ENCODE measurements at regions of chr12 and their contacts with region 1.

Region 1: DNA sequence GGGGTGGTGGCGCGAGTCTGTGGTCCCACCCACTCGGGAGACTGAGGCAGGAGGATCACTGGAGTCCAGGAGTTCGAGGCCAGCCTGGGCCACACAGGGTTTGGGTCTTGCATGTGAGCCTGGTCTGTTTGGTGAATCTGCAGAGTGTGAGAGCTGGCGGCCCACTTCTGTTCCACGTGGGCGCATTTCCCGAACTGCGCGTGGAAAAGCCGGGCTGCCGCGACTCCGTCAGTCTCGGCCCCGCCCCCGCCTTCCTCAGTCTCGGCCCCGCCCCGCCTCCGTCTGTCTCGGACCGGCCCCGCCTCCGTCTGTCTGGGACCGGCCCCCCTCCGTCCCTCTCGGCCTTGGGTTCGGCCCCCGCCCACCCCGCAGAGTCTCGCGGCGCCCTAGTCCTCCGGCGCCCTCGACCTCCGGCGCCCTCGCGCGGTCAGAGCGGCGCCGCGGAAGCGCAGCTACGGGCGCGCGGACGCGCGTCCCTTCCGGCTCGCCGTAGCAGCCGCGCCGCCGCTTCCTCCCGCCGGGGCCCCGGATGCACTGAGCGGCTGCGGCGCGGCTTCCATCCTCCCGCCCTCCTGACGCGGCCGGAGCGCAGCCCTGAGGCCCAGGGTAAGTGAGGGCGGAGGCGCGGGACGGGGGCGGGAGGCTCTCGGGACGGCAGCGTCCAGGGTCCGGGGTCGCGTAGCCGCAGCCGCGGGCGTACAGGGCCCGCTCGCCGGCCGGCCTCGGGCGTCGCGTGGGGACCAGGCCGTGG is at the start of gene EP400:
- DNase-seq: peak; percentile 96 to 98 (median 97)
- H3K4me3 ChIP-seq: peak within 1 kb of the TSS; percentile 89
- H3K27ac ChIP-seq: peak within 1 kb of the TSS; percentile 13 to 75
- H3K4me1 ChIP-seq: peaks cover 8% of the 10 kb centered on the region
- H3K27me3 ChIP-seq: no peaks in the 10 kb centered on the region
- CTCF ChIP-seq: peak in 2 of 3 donors; percentile 53 to 75
- EP300 ChIP-seq: no peak
- POLR2A ChIP-seq: no peak
- total RNA-seq, gene EP400: 20.3 to 60.7 (median 50.4) TPM

Region 2: DNA sequence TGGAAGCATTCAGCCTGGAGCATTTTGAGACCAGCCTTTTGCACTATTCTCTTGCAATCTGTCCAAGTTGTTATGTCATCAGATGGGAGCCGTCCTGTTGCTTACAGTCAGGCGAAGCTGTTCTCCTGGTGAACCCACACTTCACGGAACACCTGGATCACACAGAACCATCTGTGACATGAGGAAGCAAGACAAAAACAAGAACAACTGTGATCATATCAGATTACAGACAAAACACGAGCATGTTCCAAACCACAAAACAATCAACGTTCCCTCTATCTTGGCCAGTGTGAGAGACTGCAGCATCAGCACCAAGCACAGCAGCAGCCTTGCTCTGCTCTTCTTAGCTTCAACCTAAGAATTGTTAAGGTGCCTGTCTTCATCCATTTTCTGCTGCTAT is 419.2 kb before region 1 on chr12:
- intact Hi-C with region 1: no loop called
- DNase-seq: no peak
- H3K4me3 ChIP-seq: no peak overlapping the region
- H3K27ac ChIP-seq: no peak overlapping the region
- H3K4me1 ChIP-seq: no peaks in the 10 kb centered on the region
- H3K27me3 ChIP-seq: no peaks in the 10 kb centered on the region
- CTCF ChIP-seq: no peak
- EP300 ChIP-seq: no peak
- POLR2A ChIP-seq: no peak

Region 3: DNA sequence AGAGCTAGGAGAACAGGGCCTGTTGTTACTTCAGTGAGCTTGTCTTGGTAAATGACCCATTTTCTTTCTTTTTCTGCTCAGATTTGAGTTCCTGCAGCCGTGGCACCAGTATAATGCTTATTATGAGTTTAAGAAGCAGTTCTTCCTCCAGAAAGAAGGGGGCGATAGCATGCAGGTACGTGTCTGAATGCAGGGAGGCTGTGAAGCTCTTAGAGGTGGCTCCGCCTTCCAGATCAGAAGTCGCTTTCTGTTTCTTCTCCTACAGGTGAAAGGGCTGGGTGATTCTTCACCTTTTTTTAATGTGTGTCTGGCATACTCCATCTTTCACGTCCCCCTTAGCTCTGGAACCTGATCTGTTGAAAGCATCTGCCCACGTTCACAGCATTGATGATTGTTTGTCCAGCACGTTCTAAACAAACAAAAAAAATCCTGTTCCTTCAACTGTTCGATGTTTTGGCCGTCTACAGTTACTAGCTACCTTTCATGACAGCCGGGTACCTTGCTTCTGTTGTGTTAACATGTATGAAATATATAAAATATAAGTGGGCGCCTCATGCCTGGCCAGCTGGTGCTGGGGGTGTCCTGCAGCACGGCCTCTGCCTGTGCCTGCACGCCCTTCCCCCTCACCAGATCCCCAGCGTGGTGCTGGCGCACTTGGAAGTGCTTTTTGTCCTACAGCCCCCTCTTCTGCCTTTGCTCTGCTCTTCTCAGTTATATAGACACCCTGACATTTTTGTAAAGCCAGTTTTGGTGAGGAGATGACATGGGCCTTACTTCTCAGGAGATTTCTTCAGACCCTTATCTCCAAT is 194.1 kb before region 1 on chr12:
- intact Hi-C with region 1: no loop called
- DNase-seq: peak in 1 of 5 donors; percentile 15
- H3K4me3 ChIP-seq: no peak overlapping the region
- H3K27ac ChIP-seq: no peak overlapping the region
- H3K4me1 ChIP-seq: no peaks in the 10 kb centered on the region
- H3K27me3 ChIP-seq: no peaks in the 10 kb centered on the region
- CTCF ChIP-seq: no peak
- EP300 ChIP-seq: no peak
- POLR2A ChIP-seq: no peak

Region 4: DNA sequence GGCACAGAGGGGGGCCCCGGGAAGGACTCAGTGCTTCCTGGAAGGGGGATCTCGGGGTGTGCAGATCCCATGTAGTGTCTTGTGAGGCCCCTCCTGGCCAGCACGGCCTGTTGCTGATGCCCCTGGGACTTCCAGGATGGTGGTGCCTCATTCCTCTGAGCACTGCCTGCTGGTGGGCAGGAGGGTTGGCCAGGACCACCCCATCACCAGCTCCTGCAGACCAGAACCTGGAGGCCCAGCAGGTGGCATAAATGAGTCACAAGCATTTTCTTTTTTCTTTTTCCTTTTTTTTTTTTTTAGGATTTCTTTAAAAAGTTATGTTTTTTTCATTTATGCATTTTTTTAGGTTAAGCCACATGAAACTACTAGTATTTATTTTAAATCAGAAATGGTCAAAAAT is 113.4 kb before region 1 on chr12:
- intact Hi-C with region 1: loop called in 1 of 4 experiments (anchors 5 kb)
- DNase-seq: no peak
- H3K4me3 ChIP-seq: no peak overlapping the region
- H3K27ac ChIP-seq: no peak overlapping the region
- H3K4me1 ChIP-seq: peaks cover 5% of the 10 kb centered on the region
- H3K27me3 ChIP-seq: no peaks in the 10 kb centered on the region
- CTCF ChIP-seq: no peak
- EP300 ChIP-seq: no peak
- POLR2A ChIP-seq: no peak

Region 5: GRCh38 chr12:131872185-131873051 is 77.2 kb before region 1 on chr12:
- intact Hi-C with region 1: no loop called
- DNase-seq: peak in 1 of 5 donors; percentile 23
- H3K4me3 ChIP-seq: no peak overlapping the region
- H3K27ac ChIP-seq: no peak overlapping the region
- H3K4me1 ChIP-seq: no peaks in the 10 kb centered on the region
- H3K27me3 ChIP-seq: no peaks in the 10 kb centered on the region
- CTCF ChIP-seq: no peak
- EP300 ChIP-seq: no peak
- POLR2A ChIP-seq: no peak

Region 6: GRCh38 chr12:131896080-131896810 is 53.4 kb before region 1 on chr12:
- intact Hi-C with region 1: loop called in 1 of 4 experiments (anchors 2 kb)
- DNase-seq: peak; percentile 93 to 96 (median 94)
- H3K4me3 ChIP-seq: peak overlapping the region; percentile 60
- H3K27ac ChIP-seq: peak overlapping the region; percentile 98
- H3K4me1 ChIP-seq: peaks cover 7% of the 10 kb centered on the region
- H3K27me3 ChIP-seq: no peaks in the 10 kb centered on the region
- CTCF ChIP-seq: peak in 1 of 3 donors; percentile 29
- EP300 ChIP-seq: peak; percentile 90
- POLR2A ChIP-seq: peak; percentile 96

Region 7: GRCh38 chr12:131928711-131929580 is 20.7 kb before region 1 on chr12 and contains the start of gene PUS1:
- intact Hi-C with region 1: loop called in 1 of 4 experiments (anchors 2 kb)
- DNase-seq: peak; percentile 93 to 96 (median 94)
- H3K4me3 ChIP-seq: peak within 1 kb of the TSS; percentile 77
- H3K27ac ChIP-seq: peak within 1 kb of the TSS in 1 of 2 donors; percentile 74
- H3K4me1 ChIP-seq: peaks cover 7% of the 10 kb centered on the region
- H3K27me3 ChIP-seq: no peaks in the 10 kb centered on the region
- CTCF ChIP-seq: no peak
- EP300 ChIP-seq: no peak
- POLR2A ChIP-seq: no peak
- total RNA-seq, gene PUS1: 11.4 to 34.7 (median 19.3) TPM